Posterior cingulate gyrus (tissue), 11 donors: ENCODE measurements at regions of chr13 and their contacts with region 1.

Region 1: DNA sequence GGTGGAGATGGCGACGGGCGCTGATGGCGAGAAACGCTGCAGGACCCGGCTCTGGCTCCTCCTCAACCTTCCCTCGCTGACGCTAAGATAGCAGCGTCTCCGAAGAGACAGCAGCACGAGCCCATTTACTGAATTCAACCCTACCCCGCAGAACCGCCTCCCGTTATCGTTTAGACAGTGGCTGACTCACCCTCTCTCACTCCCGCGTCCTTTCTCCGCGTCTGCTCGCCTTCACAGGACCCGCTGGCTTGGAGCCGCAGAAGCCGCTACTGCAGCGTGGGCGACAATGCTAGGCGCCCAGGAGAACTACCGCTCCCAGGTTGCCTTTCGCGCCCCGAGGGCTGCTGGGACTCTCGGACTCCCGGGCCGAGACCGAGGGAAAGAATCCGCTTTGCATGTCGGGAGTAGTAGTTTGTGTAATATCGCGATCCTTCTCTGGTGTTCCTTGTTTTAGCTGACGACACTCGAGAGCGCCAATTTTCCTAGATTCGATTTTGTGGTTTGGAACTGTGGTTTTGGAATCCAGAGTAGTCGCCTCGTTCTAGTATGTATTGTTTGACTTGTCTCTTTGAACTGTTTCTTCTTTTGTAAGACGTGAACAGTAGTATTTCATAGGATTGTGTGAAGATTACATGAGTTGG is at the start of gene KBTBD6:
- DNase-seq: peak; percentile 96 to 99 (median 98)

Region 2: GRCh38 chr13:40922437-40923040 is 210.1 kb before region 1 on chr13:
- intact Hi-C with region 1: loop called (anchors 2 kb)
- DNase-seq: no peak

Region 3: DNA sequence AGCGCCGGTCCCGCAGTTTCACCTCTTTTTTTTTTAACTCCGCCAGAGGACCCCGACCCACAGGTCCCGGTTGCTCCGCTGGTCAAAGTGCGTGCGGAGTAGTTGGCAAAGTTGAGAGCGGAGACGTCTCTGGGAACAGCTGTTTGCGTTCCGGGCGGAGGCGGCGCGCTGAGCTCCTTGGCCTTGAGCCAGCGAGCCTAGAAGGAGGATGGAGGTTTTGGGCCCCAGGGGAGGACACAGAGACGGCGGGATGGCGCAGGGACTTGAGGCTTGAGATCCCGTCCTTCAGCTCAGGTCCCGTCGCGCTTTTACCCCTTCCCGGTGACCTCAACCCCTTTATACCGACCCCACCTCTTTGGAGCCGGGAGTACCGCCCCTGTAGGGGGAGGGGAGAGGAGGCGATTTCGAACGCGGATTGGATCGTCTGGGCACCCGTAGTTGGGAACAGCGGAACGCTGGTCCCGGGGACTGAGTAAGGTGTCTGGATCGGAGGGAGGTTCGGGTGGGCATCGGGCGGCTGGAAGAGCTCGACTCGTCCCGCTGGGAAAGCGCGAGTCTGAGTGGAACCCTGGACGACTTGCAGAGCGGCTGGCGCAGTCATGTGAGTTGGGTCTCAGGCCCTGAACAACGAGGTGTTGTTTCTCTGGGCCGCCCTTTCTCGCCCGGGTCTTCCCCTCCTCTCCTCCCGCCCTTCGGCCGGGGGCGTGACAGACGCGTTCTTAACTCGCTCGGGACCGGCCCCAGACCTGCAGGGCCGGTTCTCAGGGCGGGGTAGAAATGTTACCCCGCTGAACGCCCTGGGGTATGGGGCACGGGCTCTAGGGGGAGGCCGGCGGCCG is 71.3 kb before region 1 on chr13 and contains the start of gene WBP4:
- intact Hi-C with region 1: loop called (anchors 1 kb)
- DNase-seq: peak; percentile 86 to 98 (median 91)

Region 4: DNA sequence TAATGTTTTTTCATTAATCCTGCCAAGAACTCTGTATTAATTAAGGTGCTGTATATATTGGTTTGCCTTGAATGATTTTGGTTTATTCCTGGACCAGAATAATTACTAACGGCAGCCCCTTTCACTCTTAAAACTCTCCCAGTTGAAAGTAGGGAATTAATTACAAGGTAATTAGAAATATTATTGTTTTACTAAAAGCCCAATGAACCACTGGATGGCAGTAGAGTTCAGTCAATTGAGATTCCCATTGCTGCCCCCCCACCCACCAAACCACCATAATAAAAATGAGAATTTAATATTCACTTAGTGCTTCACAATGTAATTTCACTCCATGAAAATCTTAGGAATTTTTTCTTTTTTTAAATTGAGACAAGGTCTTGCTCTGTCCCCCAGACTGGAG is 57.6 kb before region 1 on chr13:
- intact Hi-C with region 1: loop called (anchors 5 kb)
- DNase-seq: peak in 1 of 10 donors; percentile 18

Region 5: DNA sequence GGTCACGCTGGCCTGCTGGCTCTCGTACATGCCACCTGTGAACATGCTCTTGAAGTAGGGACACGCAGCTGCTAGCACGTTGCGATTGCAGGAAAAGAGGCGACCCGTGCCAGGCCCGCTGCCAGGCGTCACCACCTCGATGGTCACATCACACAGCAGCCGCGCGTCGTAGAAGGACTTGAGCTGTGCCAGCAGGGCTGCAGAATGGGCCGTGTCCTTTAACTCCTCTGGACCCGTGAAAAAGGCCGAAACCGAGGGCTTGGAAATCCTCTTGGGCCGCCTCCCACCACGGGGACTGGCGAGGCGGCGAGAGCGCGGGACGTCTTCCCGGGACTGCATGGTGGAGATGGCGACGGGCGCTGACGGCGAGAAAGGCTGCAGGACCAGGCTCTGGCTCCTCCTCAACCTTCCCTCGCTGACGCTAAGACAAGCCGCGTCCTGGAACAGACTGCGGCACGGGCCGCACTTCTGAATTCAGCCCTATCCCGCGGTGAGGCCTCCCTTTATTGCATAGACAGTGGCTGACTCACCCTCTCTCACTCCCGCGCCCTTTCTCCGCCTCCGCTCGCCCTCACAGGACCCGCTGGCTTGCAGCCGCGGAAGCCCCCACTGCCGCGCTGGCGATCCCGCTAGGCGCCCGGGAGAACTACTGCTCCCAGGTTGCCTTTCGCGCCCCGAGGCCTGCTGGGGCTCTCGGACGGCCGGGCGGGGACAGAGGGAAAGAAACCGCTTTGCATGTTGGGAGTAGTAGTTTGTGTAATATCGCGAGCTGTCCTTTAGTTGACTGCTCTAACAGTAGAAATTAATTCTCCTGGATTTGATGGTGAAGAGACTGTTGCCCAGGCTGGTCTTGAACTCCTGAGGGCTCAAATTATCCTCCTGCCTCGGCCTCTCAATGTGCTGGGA is 61.5 kb after region 1 on chr13 and contains the start of gene KBTBD7:
- intact Hi-C with region 1: loop called (anchors 1 kb)
- DNase-seq: peak; percentile 91 to 99 (median 96)

Region 6: GRCh38 chr13:41263261-41264027 is 130.8 kb after region 1 on chr13 and contains the start of gene MTRF1:
- intact Hi-C with region 1: loop called (anchors 5 kb)
- DNase-seq: peak; percentile 79 to 97 (median 84)